Aorta (tissue), 5 donors: ENCODE measurements at regions of chr15 and their contacts with region 1.

Region 1: DNA sequence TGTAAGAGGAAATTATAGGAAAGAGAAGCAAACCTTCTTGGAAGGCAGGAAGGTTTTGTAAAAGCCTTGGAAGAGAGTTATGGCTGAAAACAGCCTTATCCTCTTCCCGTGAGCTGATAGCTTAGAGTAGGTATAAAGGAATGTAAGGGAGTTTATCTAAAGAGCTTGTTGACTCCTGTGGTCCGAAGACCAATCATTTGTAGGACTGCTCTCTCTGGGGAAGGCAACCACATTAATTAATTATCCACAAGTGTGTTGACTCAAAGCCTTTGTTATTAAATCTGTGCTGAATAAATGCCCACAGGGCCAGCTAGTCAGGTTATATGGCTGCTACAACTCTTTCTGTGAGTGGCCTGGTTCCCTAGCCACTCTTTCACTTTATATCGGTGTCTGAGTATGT is 452.1 kb upstream of the RASGRP1 start:
- DNase-seq: no peak
- ATAC-seq: no peak
- H3K4me3 ChIP-seq: no peak overlapping the region
- H3K27ac ChIP-seq: no peak overlapping the region
- H3K4me1 ChIP-seq: no peaks in the 10 kb centered on the region
- H3K27me3 ChIP-seq: no peaks in the 10 kb centered on the region

Region 2: GRCh38 chr15:38853608-38854007 is 163.1 kb before region 1 on chr15:
- intact Hi-C with region 1: no loop called
- DNase-seq: no peak
- ATAC-seq: no peak
- H3K4me3 ChIP-seq: no peak overlapping the region
- H3K27ac ChIP-seq: no peak overlapping the region
- H3K4me1 ChIP-seq: no peaks in the 10 kb centered on the region
- H3K27me3 ChIP-seq: no peaks in the 10 kb centered on the region

Region 3: DNA sequence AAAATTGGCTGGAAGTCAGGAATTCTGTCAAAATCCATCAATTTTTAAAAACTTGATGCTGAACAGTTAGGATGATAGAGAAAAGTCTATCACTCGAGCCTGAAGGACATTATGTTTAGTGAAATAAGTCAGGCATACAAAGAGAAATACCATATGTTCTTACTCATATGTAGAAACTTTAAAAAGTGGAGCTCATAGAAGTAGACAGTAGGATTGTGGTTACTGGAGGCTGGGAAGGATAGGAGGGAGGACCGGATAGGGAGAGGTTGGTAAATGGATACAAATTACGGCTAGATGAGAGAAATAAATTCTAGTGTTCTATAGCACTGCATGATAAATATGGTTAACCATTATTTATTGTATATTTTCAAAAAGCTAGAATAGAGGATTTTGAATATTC is 62.6 kb before region 1 on chr15:
- intact Hi-C with region 1: loop called in 1 of 2 experiments (anchors 10 kb)
- DNase-seq: no peak
- ATAC-seq: no peak
- H3K4me3 ChIP-seq: no peak overlapping the region
- H3K27ac ChIP-seq: no peak overlapping the region
- H3K4me1 ChIP-seq: no peaks in the 10 kb centered on the region
- H3K27me3 ChIP-seq: no peaks in the 10 kb centered on the region